ENCODE measurements at regions of chr5 and their contacts with region 1.

Region 1: DNA sequence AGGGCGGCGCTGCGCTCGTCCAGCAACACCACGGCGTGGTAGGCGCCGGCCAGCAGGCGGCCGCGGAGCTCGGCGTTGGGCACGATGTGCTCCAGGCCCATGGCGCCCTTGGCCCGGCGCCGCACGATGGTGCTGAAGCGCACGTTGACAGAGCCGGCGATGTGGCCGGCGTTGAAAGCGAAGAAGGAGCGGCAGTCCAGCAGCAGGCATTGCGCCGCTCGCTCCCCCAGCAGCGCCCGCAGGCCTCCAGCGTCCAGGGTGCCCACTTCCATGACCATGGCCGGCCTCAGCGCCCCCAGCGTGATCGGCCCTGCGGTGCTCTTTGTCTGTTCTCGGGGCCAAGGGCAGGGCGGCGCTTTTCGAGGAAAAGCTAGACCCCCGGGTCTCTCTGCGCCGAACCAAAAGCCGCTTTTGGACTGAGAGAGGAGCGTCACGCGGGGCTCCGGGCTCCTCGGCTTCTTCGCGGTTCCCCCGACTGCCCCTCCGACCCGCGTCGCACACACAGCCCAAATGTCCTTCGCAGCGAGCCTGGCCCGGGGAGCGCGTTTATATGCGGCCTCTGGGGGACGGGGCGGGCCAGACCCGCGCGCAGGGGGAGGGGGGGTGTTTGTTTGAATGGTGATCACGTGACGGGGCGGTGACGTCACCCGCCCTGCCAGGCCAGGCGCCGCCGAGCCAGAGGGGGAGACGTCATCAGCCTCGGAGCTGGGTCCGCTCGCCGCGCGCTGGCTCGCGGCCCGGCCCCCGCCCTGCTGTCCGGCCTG is at the start of gene DUSP1:
- DNase-seq: peak; percentile 96
- H3K4me3 ChIP-seq: peak within 1 kb of the TSS; percentile 100
- H3K27ac ChIP-seq: peak within 1 kb of the TSS; percentile 100
- H3K27me3 ChIP-seq: no peaks in the 10 kb centered on the region
- CTCF ChIP-seq: peak; percentile 56
- polyA plus RNA-seq, gene DUSP1: 98.8 and 147 TPM in 2 replicates

Region 2: GRCh38 chr5:172666251-172666650 is 104.6 kb before region 1 on chr5:
- CTCF ChIA-PET with region 1: no interaction called
- POLR2A ChIA-PET with region 1: no interaction called
- DNase-seq: no peak
- H3K4me3 ChIP-seq: no peak overlapping the region
- H3K27ac ChIP-seq: no peak overlapping the region
- H3K27me3 ChIP-seq: no peaks in the 10 kb centered on the region
- CTCF ChIP-seq: no peak

Region 3: GRCh38 chr5:172714491-172715421 is 56.1 kb before region 1 on chr5:
- CTCF ChIA-PET with region 1: interaction called, 9 read pairs
- POLR2A ChIA-PET with region 1: interaction called, 14 read pairs
- DNase-seq: no peak
- H3K4me3 ChIP-seq: no peak overlapping the region
- H3K27ac ChIP-seq: no peak overlapping the region
- H3K27me3 ChIP-seq: no peaks in the 10 kb centered on the region
- CTCF ChIP-seq: peak; percentile 92

Region 4: DNA sequence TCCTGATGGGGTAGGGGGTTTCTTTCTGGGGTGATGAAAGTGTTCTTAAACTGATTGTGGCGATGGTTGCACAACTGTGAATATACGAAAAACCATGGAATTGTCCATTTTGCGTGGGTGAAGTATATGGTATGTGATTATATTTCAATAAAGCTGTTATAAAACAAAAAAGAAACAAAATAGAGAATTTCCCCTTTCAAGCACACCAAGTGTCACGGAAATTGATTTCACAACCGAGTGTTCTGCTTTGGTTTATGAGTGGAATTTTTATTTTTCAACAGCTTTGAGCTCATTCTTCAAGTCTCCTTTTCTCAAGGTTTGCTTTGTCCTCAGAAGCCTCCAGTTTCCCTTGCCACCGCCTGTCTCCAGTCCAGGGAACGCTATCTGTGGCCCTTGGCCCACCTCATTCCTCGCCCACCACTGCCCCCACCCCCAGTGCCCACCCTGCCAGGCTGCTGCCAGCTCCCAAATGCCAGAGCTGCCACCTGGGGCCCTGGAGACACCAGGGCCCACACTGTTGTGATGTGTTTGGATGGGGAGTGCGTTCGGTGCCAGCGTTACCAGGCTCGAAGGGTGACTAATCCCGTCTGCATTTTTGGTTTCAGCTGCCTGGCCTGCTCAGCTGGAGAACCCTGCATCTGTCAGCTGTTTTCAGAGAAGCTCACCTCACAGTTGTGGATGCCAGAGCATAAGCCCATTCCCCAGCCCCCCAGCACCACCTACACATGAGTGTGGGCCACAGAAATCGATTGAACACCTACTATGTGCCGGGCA is 30.2 kb before region 1 on chr5:
- CTCF ChIA-PET with region 1: no interaction called
- POLR2A ChIA-PET with region 1: interaction called, 25 read pairs
- DNase-seq: peak; percentile 81
- H3K4me3 ChIP-seq: no peak overlapping the region
- H3K27ac ChIP-seq: peak overlapping the region; percentile 98
- H3K27me3 ChIP-seq: no peaks in the 10 kb centered on the region
- CTCF ChIP-seq: no peak

Region 5: GRCh38 chr5:172860520-172861443 is 89.9 kb after region 1 on chr5:
- CTCF ChIA-PET with region 1: no interaction called
- POLR2A ChIA-PET with region 1: interaction called, 15 read pairs
- DNase-seq: no peak
- H3K4me3 ChIP-seq: no peak overlapping the region
- H3K27ac ChIP-seq: peak overlapping the region; percentile 22
- H3K27me3 ChIP-seq: no peaks in the 10 kb centered on the region
- CTCF ChIP-seq: no peak

Region 6: GRCh38 chr5:172897481-172898217 is 126.8 kb after region 1 on chr5:
- CTCF ChIA-PET with region 1: no interaction called
- POLR2A ChIA-PET with region 1: interaction called, 16 read pairs
- DNase-seq: peak; percentile 83
- H3K4me3 ChIP-seq: no peak overlapping the region
- H3K27ac ChIP-seq: peak overlapping the region; percentile 99
- H3K27me3 ChIP-seq: no peaks in the 10 kb centered on the region
- CTCF ChIP-seq: no peak

Region 7: DNA sequence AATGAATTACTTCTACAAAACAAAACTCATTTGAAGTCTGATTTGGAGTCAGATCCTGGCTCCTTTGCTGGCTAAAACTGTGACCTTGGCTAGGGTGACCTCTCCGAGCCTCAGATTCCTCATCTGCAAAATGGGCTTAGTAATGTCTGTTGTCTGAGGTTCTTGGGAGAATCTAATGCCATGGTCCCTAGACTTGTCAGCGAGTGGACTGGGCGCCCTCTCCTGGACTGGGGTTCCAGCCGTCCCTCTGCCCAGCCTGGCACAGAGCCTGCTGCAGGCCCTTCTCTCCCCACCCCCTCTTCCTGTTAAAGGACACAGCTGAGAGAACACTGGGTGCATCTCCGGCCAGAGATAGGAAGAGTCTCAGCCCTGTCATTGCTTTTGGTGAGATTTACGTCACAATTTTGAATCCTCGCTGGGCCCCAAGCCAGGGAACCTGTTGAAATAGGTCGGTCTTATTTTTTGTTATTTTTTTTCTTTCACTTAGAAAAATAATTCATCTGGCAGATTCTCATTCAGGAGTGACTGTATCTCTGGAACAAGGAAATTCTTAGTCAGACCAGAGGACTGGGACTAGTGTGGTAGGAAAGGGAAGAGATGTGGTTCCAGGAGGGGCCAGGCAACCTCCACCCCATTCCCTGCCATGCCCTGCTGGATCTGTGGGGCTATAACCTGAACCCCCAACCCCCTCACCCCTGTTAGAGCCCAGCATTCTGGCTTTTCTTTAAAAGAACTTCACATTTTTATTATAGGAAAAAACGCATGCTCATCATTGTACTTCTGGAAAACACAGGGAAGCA is 140.2 kb after region 1 on chr5:
- CTCF ChIA-PET with region 1: no interaction called
- POLR2A ChIA-PET with region 1: interaction called, 44 read pairs
- DNase-seq: no peak
- H3K4me3 ChIP-seq: no peak overlapping the region
- H3K27ac ChIP-seq: peak overlapping the region; percentile 94
- H3K27me3 ChIP-seq: no peaks in the 10 kb centered on the region
- CTCF ChIP-seq: peak; percentile 35

Region 8: DNA sequence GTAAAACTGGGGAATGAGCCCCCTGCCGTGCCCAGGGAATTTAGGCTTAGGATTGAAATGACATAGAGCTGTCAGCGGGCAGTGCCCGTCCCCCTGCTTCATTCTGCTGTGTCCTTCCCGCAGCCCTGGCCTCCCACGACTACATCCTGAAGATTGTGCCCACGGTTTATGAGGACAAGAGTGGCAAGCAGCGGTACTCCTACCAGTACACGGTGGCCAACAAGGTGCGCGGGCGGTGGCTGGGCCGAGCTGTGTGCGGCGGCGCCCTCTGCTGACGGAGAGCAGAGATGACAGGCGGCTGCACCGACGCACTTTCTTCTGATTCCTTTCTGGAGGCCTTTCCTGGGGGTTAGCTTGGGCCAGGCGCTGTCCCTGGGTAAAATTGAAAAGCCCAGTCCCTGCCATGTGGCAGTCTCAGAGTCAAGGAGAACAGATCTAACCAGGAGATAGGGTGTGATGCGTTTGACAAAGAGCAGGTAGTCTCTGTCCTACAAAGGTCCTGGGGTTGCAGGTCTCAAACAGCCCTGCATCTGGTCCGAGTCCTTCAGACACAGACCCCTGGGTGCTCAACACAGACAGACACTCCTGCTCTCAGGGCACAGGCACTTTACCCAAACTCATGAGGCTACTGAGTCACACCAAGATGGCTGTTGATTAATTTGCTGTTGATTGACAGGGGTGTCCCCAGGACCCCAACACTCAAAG is 161.6 kb after region 1 on chr5:
- CTCF ChIA-PET with region 1: interaction called, 39 read pairs
- POLR2A ChIA-PET with region 1: interaction called, 45 read pairs
- DNase-seq: no peak
- H3K4me3 ChIP-seq: no peak overlapping the region
- H3K27ac ChIP-seq: peak overlapping the region; percentile 89
- H3K27me3 ChIP-seq: no peaks in the 10 kb centered on the region
- CTCF ChIP-seq: peak; percentile 96

Region 9: GRCh38 chr5:173057062-173057924 is 286.4 kb after region 1 on chr5:
- CTCF ChIA-PET with region 1: no interaction called
- POLR2A ChIA-PET with region 1: no interaction called
- DNase-seq: peak; percentile 97
- H3K4me3 ChIP-seq: peak overlapping the region; percentile 83
- H3K27ac ChIP-seq: peak overlapping the region; percentile 93
- H3K27me3 ChIP-seq: no peaks in the 10 kb centered on the region
- CTCF ChIP-seq: peak; percentile 35